H1 (cell line): ENCODE measurements at regions of chr7 and their contacts with region 1.

Region 1: DNA sequence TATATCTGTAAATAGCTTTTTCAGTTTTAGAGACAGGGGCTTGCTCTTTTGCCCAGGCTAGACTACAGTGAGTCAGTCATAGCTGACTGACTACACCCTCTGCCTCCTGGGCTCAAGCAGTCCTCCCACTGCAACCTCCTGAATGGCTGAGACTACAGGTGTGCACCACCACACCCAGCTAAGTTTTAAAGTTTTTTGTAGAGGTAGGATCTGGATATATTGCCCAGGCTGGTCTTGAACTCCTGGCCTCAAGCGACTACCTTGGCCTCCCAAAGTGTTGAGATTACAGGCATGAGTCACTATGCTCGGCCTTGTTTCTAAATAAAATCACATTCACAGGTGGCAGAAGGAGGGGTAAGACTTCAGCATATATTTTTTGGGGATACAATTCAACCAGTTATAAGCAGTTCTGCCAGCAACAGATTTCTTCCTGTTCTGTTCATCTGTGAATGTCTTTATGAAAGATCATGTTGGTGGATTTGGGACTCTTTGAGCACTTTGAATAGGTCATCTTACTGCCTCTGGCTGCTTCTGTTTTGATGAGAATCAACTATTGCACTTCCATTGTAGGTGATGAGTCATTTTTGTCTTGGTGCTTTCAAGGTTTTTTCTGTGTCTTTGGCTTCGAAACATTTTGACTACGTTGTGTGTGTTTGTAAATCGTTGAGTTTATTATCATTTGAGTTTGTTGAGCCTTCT is 15.7 kb downstream of the RBM33 start:
- DNase-seq: no peak
- H3K4me3 ChIP-seq: no peak overlapping the region
- H3K27ac ChIP-seq: no peak overlapping the region
- H3K4me1 ChIP-seq: peaks cover 1 to 6% (median 6%) of the 10 kb centered on the region in 4 experiments; a peak in 5 of 7 replicates
- H3K27me3 ChIP-seq: no peaks in the 10 kb centered on the region
- CTCF ChIP-seq: no peak
- EP300 ChIP-seq: no peak
- POLR2A ChIP-seq: no peak
- RAD21 ChIP-seq: no peak

Region 2: GRCh38 chr7:155648752-155649339 is 11.4 kb before region 1 on chr7:
- CTCF ChIA-PET with region 1: interaction called, 3 read pairs
- POLR2A ChIA-PET with region 1: interaction called, 10 read pairs
- DNase-seq: no peak
- H3K4me3 ChIP-seq: no peak overlapping the region
- H3K27ac ChIP-seq: no peak overlapping the region
- H3K4me1 ChIP-seq: peaks cover 0 to 5% (median 0%) of the 10 kb centered on the region in 4 experiments; a peak in 3 of 7 replicates
- H3K27me3 ChIP-seq: no peaks in the 10 kb centered on the region
- CTCF ChIP-seq: no peak
- EP300 ChIP-seq: no peak
- POLR2A ChIP-seq: no peak
- RAD21 ChIP-seq: no peak